MCF 10A (cell line): ENCODE measurements at regions of chr6 and their contacts with region 1.

Region 1: GRCh38 chr6:131914967-131915751 is 36.0 kb downstream of the CCN2 start:
- DNase-seq: peak; percentile 84
- H3K4me3 Mint-ChIP-seq: no peak overlapping the region
- H3K27ac Mint-ChIP-seq: no peak overlapping the region
- H3K4me1 Mint-ChIP-seq: no peaks in the 10 kb centered on the region
- H3K27me3 Mint-ChIP-seq: peaks cover 27% of the 10 kb centered on the region
- CTCF ChIP-seq: peak; percentile 62

Region 2: DNA sequence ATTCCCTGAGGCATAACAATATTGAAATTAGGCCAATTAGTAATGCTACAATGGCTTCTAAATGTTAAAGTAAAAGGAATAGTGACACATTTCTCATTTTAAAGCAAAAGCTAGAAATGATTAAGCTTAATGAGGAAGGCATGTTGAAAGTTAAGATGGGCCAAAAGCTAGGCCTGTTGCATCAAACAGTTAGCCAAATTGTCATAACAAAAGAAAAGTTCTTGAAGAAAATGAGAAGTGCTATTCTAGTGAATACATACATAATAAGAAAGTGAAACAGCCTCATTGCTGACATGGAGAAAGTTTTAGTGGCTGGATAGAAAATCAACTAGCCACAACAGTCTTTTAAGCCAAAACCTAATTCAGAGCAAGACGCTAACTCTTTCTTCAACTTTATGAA is 226.9 kb before region 1 on chr6:
- CTCF ChIA-PET with region 1: interaction called, 79 read pairs
- POLR2A ChIA-PET with region 1: interaction called, 3 read pairs
- intact Hi-C with region 1: no loop called
- DNase-seq: no peak
- H3K4me3 Mint-ChIP-seq: no peak overlapping the region
- H3K27ac Mint-ChIP-seq: no peak overlapping the region
- H3K4me1 Mint-ChIP-seq: no peaks in the 10 kb centered on the region
- H3K27me3 Mint-ChIP-seq: no peaks in the 10 kb centered on the region
- CTCF ChIP-seq: no peak

Region 3: GRCh38 chr6:131831392-131831791 is 83.8 kb before region 1 on chr6:
- CTCF ChIA-PET with region 1: interaction called, 12 read pairs
- POLR2A ChIA-PET with region 1: no interaction called
- intact Hi-C with region 1: no loop called
- DNase-seq: peak; percentile 61
- H3K4me3 Mint-ChIP-seq: no peak overlapping the region
- H3K27ac Mint-ChIP-seq: peak overlapping the region; percentile 90
- H3K4me1 Mint-ChIP-seq: peaks cover 34% of the 10 kb centered on the region
- H3K27me3 Mint-ChIP-seq: no peaks in the 10 kb centered on the region
- CTCF ChIP-seq: no peak

Region 4: GRCh38 chr6:131960371-131961133 is 45.4 kb after region 1 on chr6:
- CTCF ChIA-PET with region 1: interaction called, 10 read pairs
- POLR2A ChIA-PET with region 1: no interaction called
- intact Hi-C with region 1: no loop called
- DNase-seq: no peak
- H3K4me3 Mint-ChIP-seq: no peak overlapping the region
- H3K27ac Mint-ChIP-seq: no peak overlapping the region
- H3K4me1 Mint-ChIP-seq: peaks cover under 1% of the 10 kb centered on the region
- H3K27me3 Mint-ChIP-seq: no peaks in the 10 kb centered on the region
- CTCF ChIP-seq: peak; percentile 41

Region 5: DNA sequence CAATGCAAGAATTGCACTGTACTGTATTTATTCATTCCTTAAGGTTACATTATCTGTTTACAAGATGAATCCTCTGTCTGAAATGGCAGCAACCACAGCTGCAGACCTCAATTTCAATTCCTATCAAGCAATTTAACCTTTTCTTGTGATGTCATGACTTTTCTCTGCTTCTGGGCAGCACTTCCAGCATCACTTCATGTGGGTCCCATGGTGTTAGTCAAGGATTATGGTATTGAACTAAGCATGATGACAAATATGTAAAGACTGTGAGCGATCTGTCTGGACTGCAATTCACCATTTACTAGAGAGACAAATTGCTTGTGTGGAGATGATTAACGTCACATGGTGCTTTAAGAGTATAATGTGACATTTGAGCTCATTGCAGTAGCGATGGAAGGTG is 126.5 kb after region 1 on chr6:
- CTCF ChIA-PET with region 1: no interaction called
- POLR2A ChIA-PET with region 1: no interaction called
- intact Hi-C with region 1: no loop called
- DNase-seq: no peak
- H3K4me3 Mint-ChIP-seq: no peak overlapping the region
- H3K27ac Mint-ChIP-seq: no peak overlapping the region
- H3K4me1 Mint-ChIP-seq: peaks cover 6% of the 10 kb centered on the region
- H3K27me3 Mint-ChIP-seq: no peaks in the 10 kb centered on the region
- CTCF ChIP-seq: no peak

Region 6: GRCh38 chr6:132218059-132218696 is 303.0 kb after region 1 on chr6:
- CTCF ChIA-PET with region 1: interaction called, 59 read pairs
- POLR2A ChIA-PET with region 1: no interaction called
- intact Hi-C with region 1: no loop called
- DNase-seq: peak; percentile 45
- H3K4me3 Mint-ChIP-seq: no peak overlapping the region
- H3K27ac Mint-ChIP-seq: no peak overlapping the region
- H3K4me1 Mint-ChIP-seq: no peaks in the 10 kb centered on the region
- H3K27me3 Mint-ChIP-seq: no peaks in the 10 kb centered on the region
- CTCF ChIP-seq: peak; percentile 38

Region 7: GRCh38 chr6:132279592-132280139 is 364.5 kb after region 1 on chr6:
- CTCF ChIA-PET with region 1: interaction called, 47 read pairs
- POLR2A ChIA-PET with region 1: interaction called, 3 read pairs
- intact Hi-C with region 1: no loop called
- DNase-seq: peak; percentile 77
- H3K4me3 Mint-ChIP-seq: peak overlapping the region; percentile 71
- H3K27ac Mint-ChIP-seq: no peak overlapping the region
- H3K4me1 Mint-ChIP-seq: no peaks in the 10 kb centered on the region
- H3K27me3 Mint-ChIP-seq: no peaks in the 10 kb centered on the region
- CTCF ChIP-seq: peak; percentile 76